ENCODE measurements at regions of chr17 and their contacts with region 1.

Region 1: GRCh38 chr17:30808785-30809286 is 15.7 kb downstream of the CRLF3 start:
- DNase-seq: no peak
- H3K4me3 ChIP-seq: no peak overlapping the region
- H3K27ac ChIP-seq: no peak overlapping the region
- H3K4me1 ChIP-seq: no peaks in the 10 kb centered on the region
- H3K27me3 ChIP-seq: no peaks in the 10 kb centered on the region
- CTCF ChIP-seq: no peak

Region 2: DNA sequence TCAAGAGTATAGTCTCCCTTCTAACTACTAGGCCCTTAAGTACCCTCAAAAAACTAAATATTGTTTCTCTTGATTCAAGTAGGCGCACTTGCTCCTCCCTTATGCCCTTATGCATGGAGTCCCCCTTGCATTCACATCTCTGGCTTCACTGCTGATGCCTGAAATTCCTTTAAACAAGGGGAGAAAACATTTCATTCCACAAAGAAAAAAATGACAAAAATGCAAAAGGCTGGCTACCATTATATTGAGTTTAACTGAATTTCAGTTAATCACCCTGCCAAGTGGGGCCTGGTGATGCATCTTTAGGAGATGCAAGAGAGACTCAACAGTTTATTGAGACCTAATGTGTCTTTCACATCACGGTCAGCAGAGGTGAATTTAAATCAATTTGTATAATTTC is 19.9 kb before region 1 on chr17:
- CTCF ChIA-PET with region 1: no interaction called
- POLR2A ChIA-PET with region 1: no interaction called
- intact Hi-C with region 1: no loop called
- DNase-seq: no peak
- H3K4me3 ChIP-seq: no peak overlapping the region
- H3K27ac ChIP-seq: no peak overlapping the region
- H3K4me1 ChIP-seq: no peaks in the 10 kb centered on the region
- H3K27me3 ChIP-seq: no peaks in the 10 kb centered on the region
- CTCF ChIP-seq: no peak

Region 3: DNA sequence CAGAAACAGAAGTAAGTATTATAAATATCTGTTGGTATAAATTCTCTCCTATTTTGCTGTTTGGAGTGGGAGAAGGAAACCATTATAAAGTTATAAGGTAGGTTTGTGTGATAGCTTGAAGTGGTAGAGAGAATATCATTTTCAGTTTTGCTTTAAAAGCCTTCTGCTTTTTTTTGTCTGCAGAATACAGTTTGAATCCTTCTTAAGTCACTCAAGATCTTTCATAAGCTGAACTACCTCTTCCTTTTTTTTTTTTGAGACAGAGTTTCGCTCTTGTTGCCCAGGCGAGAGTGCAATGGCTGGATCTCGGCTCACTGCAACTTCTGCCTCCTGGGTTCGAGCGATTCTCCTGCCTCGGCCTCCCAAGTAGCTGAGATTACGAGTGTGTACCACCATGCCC is 31.9 kb after region 1 on chr17:
- CTCF ChIA-PET with region 1: no interaction called
- POLR2A ChIA-PET with region 1: interaction called, 19 read pairs
- intact Hi-C with region 1: no loop called
- DNase-seq: no peak
- H3K4me3 ChIP-seq: no peak overlapping the region
- H3K27ac ChIP-seq: no peak overlapping the region
- H3K4me1 ChIP-seq: no peaks in the 10 kb centered on the region
- H3K27me3 ChIP-seq: no peaks in the 10 kb centered on the region
- CTCF ChIP-seq: no peak

Measured in PC-9 (cell line).